Vagina (tissue), 2 donors: ENCODE measurements at regions of chr2 and their contacts with region 1.

Region 1: DNA sequence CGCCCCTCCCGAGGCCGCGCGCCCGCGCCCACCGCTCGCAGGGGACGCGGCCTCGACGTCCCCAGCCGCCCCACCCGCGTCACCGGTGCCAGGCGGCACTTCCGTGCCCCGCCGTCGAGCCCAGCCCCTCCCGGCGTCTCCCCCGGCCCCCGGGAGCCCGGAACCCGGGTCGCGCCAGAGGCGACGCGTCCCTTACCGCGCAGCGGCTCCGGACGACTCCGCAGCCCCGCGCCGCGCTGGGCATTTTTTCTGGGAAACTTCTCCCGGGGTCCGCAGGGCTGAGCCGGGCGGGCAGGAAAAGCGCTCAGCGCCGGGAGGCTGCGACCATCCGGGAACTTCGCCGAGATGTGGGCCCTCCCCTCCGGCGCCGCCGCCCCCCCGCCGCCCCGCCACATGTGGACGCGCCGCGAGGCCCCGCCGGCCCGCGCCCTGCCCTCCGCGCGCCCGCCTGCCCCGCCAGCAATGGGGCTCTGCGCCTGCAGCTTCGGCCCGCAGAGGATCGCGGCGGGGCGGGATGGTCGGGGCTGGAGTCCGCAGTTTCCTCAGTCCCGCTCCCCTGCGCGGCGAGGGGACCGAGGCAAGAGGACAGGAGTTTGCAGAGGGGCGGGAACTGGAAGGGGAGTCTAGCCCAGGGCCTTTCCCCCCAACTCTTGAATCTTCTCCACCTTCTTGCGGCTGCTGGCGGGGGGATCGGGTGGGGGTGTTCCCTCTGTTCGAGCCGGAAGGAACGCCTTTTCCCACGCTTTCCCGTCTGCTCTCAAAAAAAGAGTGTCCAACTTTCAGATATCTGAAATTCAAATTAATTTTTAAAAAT is 81.5 kb downstream of the CHRNA1 start:
- DNase-seq: no peak
- H3K4me3 ChIP-seq: peak overlapping the region; percentile 84 to 92
- H3K27ac ChIP-seq: peak overlapping the region; percentile 94
- H3K4me1 ChIP-seq: peaks cover 47% of the 10 kb centered on the region
- H3K27me3 ChIP-seq: no peaks in the 10 kb centered on the region
- CTCF ChIP-seq: no peak
- POLR2A ChIP-seq: peak in 1 of 2 donors; percentile 1

Region 2: DNA sequence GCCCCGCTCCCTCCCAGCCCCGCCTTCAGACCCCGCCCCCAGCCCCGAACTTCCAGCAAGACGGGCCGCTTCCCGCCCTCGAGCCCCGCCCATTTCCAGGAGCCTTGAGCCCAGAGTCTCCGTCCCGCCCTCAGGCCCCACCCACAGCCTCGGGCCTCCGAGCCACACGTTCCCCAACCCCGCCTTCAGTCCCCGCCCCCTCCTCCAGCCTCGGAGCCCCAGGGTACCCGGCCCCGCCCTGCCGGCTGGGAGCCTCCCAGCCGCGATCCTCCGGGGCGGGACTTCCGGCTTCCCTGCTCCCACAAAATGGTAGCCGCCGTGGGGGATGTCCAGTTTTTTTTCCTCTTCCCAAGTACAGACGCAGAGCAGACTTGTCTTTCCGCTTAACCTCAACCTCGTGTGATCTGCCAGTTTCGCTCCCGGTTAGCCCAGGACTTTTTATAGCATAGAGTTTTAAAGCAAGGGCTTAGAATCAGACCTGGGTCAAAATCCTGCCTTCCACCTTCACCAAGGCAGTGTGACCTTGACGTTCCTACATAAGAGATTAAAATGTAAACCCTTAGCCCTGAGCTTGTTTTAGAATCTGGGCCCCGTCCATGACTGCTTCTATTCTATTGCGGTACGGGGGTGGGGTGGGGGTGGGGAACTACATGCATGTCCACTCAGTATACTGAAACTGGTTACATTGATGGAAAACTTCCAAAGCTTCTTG is 195.5 kb before region 1 on chr2:
- intact Hi-C with region 1: loop called (anchors 2 kb)
- DNase-seq: peak in 1 of 2 donors; percentile 97
- H3K4me3 ChIP-seq: peak overlapping the region; percentile 80 to 97
- H3K27ac ChIP-seq: peak overlapping the region; percentile 65
- H3K4me1 ChIP-seq: peaks cover 19% of the 10 kb centered on the region
- H3K27me3 ChIP-seq: no peaks in the 10 kb centered on the region
- CTCF ChIP-seq: no peak
- POLR2A ChIP-seq: peak in 1 of 2 donors; percentile 8